OCI-LY7 (cell line): ENCODE measurements at regions of chr5 and their contacts with region 1.

Region 1: DNA sequence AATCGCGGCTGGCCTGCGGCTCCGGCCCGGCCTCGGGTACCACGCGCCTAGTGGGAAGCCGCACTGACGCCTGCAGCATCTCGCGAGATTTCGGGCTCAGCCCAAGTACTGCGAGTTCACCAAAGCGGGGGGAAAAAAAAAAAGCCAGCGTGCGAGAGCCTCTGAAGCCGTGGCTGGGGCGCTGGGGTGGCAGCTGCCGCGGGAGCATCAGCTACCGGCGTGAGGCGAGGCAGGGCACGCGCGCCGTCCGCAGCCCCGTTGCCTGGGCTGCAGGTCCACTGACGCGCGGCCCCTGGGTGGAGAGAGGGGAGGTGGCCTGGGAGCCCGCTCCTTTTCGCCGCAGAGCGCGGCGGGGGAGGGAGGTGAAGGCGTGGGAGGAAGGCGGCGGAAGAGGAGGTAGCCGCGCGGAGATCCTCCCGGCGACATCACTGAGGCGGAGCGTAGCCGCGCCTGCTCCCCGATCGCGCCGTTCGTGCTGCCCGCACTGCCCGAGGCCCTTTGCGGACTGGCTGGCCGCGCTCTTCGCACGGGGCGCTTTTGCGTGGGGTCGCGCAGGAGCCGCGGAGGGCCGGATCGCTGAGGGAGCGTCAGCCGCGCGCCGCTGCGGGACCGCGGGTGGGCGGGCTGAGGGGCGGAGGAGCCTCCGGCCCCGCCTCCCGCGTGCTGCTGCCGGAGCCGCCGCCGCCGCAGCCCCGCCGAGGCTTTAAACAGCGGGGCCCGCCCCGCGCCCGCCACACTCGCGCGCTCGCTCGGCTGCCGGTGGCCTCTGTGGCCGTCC is at the start of gene SLC12A2:
- DNase-seq: peak; percentile 96
- H3K4me3 ChIP-seq: peak within 1 kb of the TSS; percentile 83
- H3K27ac ChIP-seq: peak within 1 kb of the TSS; percentile 92
- H3K4me1 ChIP-seq: peaks cover 43% of the 10 kb centered on the region
- CTCF ChIP-seq: no peak
- total RNA-seq, gene SLC12A2: 20.6 and 24.1 TPM in 2 replicates

Region 2: GRCh38 chr5:126610160-126610559 is 1473.1 kb before region 1 on chr5:
- CTCF ChIA-PET with region 1: no interaction called
- POLR2A ChIA-PET with region 1: no interaction called
- intact Hi-C with region 1: loop called (anchors 5 kb)
- DNase-seq: no peak
- H3K4me3 ChIP-seq: peak overlapping the region; percentile 86
- H3K27ac ChIP-seq: peak overlapping the region; percentile 97
- H3K4me1 ChIP-seq: peaks cover 94% of the 10 kb centered on the region
- CTCF ChIP-seq: no peak

Region 3: DNA sequence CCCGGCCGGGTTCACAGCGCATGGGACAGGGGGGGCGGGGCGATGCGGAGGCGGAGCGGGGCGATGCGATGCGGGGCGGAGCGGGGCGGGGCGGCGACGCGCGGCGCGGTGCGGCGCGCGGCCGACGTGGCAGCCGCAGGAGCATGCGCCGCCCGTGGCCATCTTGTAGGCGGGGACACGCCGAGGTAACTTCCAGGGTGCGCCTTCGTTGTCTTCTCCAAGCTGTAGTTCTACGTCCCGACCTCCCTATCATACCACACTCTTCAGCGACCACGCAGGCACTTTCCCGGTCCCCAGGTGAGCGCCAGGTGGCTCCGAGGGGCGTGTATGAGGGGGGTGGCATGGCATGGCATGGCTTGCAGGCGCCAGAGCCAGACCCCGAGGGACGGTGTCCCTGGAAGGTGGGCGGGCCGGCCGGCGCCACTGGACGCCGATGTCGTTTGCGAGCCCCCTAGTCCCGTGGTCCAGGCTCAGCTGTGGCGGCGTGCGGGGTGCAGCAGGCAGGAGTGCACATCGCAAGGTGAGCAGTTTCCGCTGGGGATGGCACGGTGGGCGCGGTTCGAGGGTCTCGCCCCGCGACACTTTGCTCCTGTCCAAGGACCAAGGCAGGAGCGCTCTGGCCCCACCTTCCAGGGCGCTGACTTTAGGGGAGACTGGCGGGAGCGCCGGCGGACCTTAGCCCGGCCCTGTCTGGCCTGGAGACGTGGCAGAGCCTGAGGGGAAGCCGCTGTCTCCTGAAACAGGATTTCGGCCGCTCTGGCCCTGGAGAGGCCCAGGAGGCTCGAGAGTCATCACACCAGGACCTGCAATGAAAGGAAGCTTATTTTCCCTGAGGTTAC is 565.5 kb before region 1 on chr5 and contains the start of gene PRRC1:
- CTCF ChIA-PET with region 1: no interaction called
- POLR2A ChIA-PET with region 1: no interaction called
- intact Hi-C with region 1: loop called (anchors 5 kb)
- DNase-seq: peak; percentile 87
- H3K4me3 ChIP-seq: peak within 1 kb of the TSS; percentile 99
- H3K27ac ChIP-seq: peak within 1 kb of the TSS; percentile 51
- H3K4me1 ChIP-seq: peaks cover 14% of the 10 kb centered on the region
- CTCF ChIP-seq: no peak
- total RNA-seq, gene PRRC1: 32.7 and 37.3 TPM in 2 replicates

Region 4: DNA sequence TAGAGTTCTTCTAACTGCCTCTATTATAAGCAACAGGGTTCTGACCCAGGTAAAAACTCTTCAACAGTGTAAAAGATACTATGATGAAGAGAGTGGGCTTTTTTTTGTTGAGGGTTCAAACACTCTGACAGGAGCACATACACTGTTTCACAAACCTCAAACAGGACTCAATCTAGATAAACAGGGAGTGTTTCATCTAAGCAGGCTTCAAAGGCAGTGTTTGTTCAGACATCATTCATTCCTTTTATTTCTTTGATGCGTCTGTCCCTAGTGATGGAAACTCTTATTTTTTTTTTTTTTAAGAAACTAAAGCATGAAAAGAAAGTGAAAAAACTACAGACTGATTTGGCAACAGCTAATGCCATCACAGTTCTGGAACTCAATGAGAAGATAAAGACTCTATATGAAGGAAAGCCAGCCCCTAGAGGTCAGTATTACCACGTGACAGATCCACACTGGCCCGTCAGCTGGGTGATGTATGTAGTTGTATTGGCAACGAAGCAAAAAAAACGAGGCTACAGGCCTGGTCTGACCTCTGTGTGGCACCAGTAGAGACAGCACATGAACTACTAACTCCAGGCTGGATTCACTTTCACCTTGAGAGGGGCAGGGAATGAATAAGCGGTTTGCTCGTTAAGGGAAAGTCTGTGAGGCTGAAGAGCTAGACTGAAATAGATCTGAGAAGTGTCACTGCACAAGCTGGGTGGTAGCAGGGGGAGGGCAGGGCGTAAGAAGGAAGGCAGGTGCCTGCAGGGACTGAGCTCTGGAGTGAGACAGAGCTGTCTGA is 207.8 kb before region 1 on chr5:
- CTCF ChIA-PET with region 1: no interaction called
- POLR2A ChIA-PET with region 1: no interaction called
- intact Hi-C with region 1: loop called (anchors 2 kb)
- DNase-seq: peak; percentile 60
- H3K4me3 ChIP-seq: no peak overlapping the region
- H3K27ac ChIP-seq: no peak overlapping the region
- H3K4me1 ChIP-seq: no peaks in the 10 kb centered on the region
- CTCF ChIP-seq: peak; percentile 68

Region 5: DNA sequence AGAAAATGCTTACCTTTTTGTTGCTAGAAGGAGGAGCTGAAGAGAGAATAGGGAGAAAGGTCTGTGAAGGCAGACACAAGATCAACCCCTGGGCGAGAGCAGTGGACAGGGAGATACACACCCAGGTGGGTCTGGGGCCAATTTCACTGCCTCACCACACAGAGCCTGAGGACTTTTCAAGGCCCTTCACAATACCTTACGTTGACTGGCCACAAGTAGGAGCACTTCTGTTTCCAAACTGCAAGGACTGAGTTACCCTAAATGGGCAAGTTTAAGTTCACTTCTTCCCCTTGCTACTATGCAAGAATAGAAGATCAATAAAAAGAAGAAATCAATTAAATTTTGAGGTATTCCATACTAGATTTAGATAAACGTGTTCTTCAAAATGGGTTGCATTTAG is 174.1 kb before region 1 on chr5:
- CTCF ChIA-PET with region 1: no interaction called
- POLR2A ChIA-PET with region 1: interaction called, 4 read pairs
- intact Hi-C with region 1: loop called (anchors 5 kb)
- DNase-seq: peak; percentile 41
- H3K4me3 ChIP-seq: no peak overlapping the region
- H3K27ac ChIP-seq: no peak overlapping the region
- H3K4me1 ChIP-seq: no peaks in the 10 kb centered on the region
- CTCF ChIP-seq: peak; percentile 70

Region 6: GRCh38 chr5:128101676-128102075 is 18.5 kb after region 1 on chr5:
- CTCF ChIA-PET with region 1: no interaction called
- POLR2A ChIA-PET with region 1: interaction called, 10 read pairs
- intact Hi-C with region 1: no loop called
- DNase-seq: no peak
- H3K4me3 ChIP-seq: no peak overlapping the region
- H3K27ac ChIP-seq: no peak overlapping the region
- H3K4me1 ChIP-seq: peaks cover 6% of the 10 kb centered on the region
- CTCF ChIP-seq: no peak